ENCODE measurements at regions of chr2 and their contacts with region 1.

Region 1: GRCh38 chr2:73736855-73737779 is at the start of gene TPRKB:
- DNase-seq: peak; percentile 97 to 98
- ATAC-seq: peak; percentile 100
- H3K4me3 ChIP-seq: peak within 1 kb of the TSS; percentile 71
- H3K27ac ChIP-seq: peak within 1 kb of the TSS; percentile 75
- H3K4me1 ChIP-seq: peaks cover 20% of the 10 kb centered on the region
- H3K27me3 ChIP-seq: no peaks in the 10 kb centered on the region
- CTCF ChIP-seq: no peak
- total RNA-seq, gene TPRKB: 21.8 to 35.1 (median 27.1) TPM

Region 2: GRCh38 chr2:74461187-74462046 is 724.3 kb after region 1 on chr2:
- intact Hi-C with region 1: loop called (anchors 2 to 10 kb)
- DNase-seq: no peak
- ATAC-seq: no peak
- H3K4me3 ChIP-seq: no peak overlapping the region
- H3K27ac ChIP-seq: no peak overlapping the region
- H3K4me1 ChIP-seq: peaks cover 31% of the 10 kb centered on the region
- H3K27me3 ChIP-seq: no peaks in the 10 kb centered on the region
- CTCF ChIP-seq: no peak

Measured in psoas muscle (tissue), 8 donors.